Activated naive CD4-positive, alpha-beta T cell treated with anti-CD3 and anti-CD28 coated beads for 36 hours (primary cell): ENCODE measurements at regions of chr5 and their contacts with region 1.

Region 1: DNA sequence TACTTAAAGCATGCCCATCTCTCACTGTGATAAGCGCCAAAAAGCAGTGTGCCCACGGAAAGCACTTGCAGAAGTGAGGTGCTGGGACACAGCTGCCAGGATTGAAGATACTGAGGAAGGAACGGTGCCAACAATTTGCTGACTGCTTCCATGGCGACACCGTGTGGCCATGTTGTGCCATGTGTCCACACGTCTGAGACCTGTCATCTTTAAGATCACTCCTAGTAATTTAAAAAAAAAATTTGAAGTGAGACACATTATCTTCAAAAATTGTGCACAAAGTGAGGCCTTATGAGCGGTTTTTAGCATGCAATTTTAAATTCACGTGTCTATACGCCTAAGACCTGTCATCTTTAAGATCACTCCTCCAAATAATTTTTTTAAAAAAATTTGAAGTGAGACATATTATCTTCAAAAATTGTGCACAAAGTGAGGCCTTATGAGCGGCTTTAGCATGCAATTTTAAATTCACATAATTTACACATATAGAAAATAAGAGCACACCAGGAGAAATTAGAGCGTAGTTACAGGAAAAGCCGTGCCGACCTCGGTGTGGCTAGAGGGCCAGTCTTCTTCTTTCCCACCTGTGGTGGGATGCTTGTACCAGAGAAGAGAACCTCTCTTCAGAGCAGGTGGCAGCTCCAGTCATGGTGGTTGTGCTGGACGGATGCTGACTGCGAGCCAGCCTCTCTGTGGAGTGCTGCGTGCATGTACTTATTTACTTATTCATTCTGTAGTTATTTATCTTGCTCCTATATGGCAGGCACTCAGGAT is 21.4 kb upstream of the FLT4 start:
- DNase-seq: peak; percentile 79
- H3K4me3 Mint-ChIP-seq: peak overlapping the region; percentile 10
- H3K27ac Mint-ChIP-seq: no peak overlapping the region
- H3K4me1 Mint-ChIP-seq: peaks cover 15% of the 10 kb centered on the region
- H3K27me3 Mint-ChIP-seq: peaks cover 7% of the 10 kb centered on the region

Region 2: DNA sequence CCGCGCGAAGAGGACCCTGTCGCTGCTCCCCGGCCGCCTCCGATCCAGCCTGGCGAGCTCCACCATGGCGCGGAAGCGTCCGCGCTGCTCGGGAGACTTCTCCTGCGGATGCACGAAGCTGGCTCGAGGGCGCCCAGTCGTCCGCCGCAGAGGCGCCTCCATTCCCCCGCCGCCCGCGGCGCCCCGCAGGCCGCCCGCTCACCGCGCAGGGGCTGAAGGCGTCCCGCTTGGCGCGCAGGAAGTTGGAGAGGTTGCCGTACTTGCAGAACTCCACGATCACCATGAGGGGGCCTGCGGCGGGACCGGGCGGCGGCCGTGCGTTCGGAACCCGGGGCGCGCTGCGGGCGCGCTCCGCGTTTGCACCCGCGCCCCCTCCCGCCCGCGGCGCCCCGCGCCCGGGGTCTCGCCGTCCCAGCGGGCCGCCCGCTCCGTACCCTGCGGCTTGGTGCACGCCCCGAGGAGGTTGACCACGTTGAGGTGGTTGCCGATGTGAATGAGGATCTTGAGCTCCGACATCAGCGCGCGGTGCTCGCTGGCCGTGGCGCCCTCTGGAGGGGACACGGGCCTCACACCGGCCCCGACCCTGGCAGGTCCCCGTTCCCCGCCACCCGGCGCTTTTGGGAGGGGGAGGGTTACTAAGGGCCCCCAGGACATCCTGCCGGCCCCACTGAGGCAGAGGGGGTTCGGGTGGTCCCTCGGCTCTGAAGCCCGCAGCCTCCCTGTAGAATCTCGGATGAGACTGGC is 51.8 kb before region 1 on chr5:
- CTCF ChIA-PET with region 1: interaction called, 4 read pairs
- intact Hi-C with region 1: loop called (anchors 1 kb)
- DNase-seq: peak; percentile 53
- H3K4me3 Mint-ChIP-seq: peak overlapping the region; percentile 60
- H3K27ac Mint-ChIP-seq: no peak overlapping the region
- H3K4me1 Mint-ChIP-seq: peaks cover 13% of the 10 kb centered on the region
- H3K27me3 Mint-ChIP-seq: no peaks in the 10 kb centered on the region